ENCODE measurements at regions of chr5 and their contacts with region 1.

Region 1: GRCh38 chr5:66814146-66814991 is 218.2 kb downstream of the MAST4 start:
- DNase-seq: peak; percentile 71
- ATAC-seq: peak; percentile 74
- H3K4me3 Mint-ChIP-seq: no peak overlapping the region
- H3K27ac Mint-ChIP-seq: no peak overlapping the region
- H3K4me1 Mint-ChIP-seq: peaks cover 5% of the 10 kb centered on the region
- H3K27me3 Mint-ChIP-seq: peaks cover 1% of the 10 kb centered on the region
- CTCF ChIP-seq: peak; percentile 87

Region 2: DNA sequence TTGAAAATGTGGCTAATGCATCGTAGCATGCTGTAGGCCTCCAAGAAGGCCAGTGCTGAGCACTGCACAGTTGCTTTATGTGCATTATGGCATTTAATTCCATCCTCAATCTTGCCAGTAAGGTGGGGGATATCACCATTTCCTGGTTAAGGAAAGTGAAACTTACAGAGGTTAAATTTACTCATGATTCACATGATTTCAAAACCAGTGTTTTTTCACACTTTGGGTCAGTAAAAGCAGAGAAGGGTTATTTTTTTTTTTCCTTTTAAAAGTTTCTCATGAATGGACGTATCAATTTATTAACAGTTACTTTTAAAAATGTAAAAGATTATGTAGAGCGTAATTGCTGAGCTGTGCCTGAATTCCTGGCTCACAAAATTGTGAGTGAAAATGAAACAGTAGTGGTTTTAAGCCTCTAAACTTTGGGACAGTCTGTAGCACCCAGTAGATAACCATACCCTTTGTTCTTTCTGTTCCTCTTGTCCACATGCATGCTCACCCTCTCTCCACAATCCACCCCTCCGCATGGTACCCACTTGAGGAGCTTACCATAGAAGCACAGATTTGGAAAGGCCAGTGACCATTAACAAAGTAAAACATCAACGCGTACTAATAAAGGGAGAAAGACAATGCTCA is 197.0 kb before region 1 on chr5:
- CTCF ChIA-PET with region 1: no interaction called
- POLR2A ChIA-PET with region 1: no interaction called
- intact Hi-C with region 1: no loop called
- DNase-seq: no peak
- ATAC-seq: peak; percentile 66
- H3K4me3 Mint-ChIP-seq: no peak overlapping the region
- H3K27ac Mint-ChIP-seq: no peak overlapping the region
- H3K4me1 Mint-ChIP-seq: peaks cover 8% of the 10 kb centered on the region
- H3K27me3 Mint-ChIP-seq: peaks cover 4% of the 10 kb centered on the region
- CTCF ChIP-seq: no peak

Region 3: GRCh38 chr5:66828548-66829357 is 14.4 kb after region 1 on chr5:
- CTCF ChIA-PET with region 1: interaction called, 7 read pairs
- POLR2A ChIA-PET with region 1: interaction called, 10 read pairs
- intact Hi-C with region 1: no loop called
- DNase-seq: peak; percentile 87
- ATAC-seq: peak; percentile 94
- H3K4me3 Mint-ChIP-seq: peak overlapping the region; percentile 83
- H3K27ac Mint-ChIP-seq: peak overlapping the region; percentile 82
- H3K4me1 Mint-ChIP-seq: peaks cover 23% of the 10 kb centered on the region
- H3K27me3 Mint-ChIP-seq: peaks cover 39% of the 10 kb centered on the region
- CTCF ChIP-seq: no peak

Region 4: DNA sequence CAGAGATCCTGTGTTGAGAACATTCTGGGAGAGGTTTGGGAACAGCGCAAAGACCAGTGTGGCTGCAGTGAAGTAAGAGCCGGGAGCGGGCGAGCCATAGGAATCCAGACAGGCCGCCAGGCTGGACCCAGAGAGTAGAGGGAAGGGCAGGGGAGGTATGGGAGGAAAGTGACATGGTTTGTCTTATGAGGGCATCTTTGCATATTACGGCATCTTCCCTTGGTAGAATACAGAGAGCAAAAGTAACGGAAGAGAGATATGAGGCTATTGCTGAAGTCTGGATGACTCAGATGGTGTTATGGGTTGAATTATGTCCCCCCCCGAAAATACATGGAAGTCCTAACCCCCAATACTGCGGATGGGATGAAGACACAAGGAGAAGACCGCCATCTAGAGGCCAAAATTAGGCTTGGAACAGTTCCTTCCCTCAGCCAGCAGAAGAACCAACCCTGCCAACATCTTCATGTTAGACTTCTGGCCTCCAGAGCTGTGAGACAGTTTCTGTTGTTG is 50.0 kb after region 1 on chr5:
- CTCF ChIA-PET with region 1: interaction called, 59 read pairs
- POLR2A ChIA-PET with region 1: no interaction called
- intact Hi-C with region 1: loop called (anchors 5 kb)
- DNase-seq: peak; percentile 46
- ATAC-seq: peak; percentile 77
- H3K4me3 Mint-ChIP-seq: no peak overlapping the region
- H3K27ac Mint-ChIP-seq: no peak overlapping the region
- H3K4me1 Mint-ChIP-seq: no peaks in the 10 kb centered on the region
- H3K27me3 Mint-ChIP-seq: peaks cover 11% of the 10 kb centered on the region
- CTCF ChIP-seq: peak; percentile 62

Region 5: DNA sequence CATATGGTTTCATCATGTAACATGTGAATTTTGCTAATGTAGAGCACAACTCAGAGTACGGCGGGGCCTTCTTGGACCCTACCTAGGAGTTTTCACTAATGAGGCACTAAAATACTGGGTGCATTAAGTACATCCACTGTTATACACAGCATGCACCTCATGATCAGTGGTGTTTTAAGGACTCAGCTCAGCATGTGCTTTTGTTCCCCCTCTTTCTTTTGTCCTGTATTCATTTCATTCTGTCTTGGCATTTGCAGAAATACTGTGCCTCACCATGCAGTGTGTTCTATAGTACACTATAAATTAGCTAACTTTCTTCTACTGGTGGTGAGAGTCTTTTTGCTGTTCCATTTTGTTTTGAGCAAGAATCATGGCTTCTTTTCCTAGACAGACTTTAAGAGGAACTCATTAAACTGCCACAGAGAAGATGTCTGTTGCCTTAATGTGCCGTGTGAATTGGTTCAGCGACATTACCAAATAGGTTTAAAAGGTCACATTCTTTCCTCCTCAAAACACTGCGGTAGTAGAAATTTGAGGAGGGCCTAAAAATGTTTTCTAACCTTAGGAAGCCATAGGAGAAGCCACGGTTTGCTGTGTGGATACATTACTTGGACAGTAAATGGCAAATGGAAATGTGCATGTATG is 58.4 kb after region 1 on chr5:
- CTCF ChIA-PET with region 1: interaction called, 18 read pairs
- POLR2A ChIA-PET with region 1: no interaction called
- intact Hi-C with region 1: no loop called
- DNase-seq: no peak
- ATAC-seq: no peak
- H3K4me3 Mint-ChIP-seq: no peak overlapping the region
- H3K27ac Mint-ChIP-seq: no peak overlapping the region
- H3K4me1 Mint-ChIP-seq: no peaks in the 10 kb centered on the region
- H3K27me3 Mint-ChIP-seq: peaks cover 1% of the 10 kb centered on the region
- CTCF ChIP-seq: no peak

Region 6: GRCh38 chr5:67003935-67004729 is 189.8 kb after region 1 on chr5:
- CTCF ChIA-PET with region 1: no interaction called
- POLR2A ChIA-PET with region 1: no interaction called
- intact Hi-C with region 1: no loop called
- DNase-seq: peak; percentile 93
- ATAC-seq: peak; percentile 83
- H3K4me3 Mint-ChIP-seq: peak overlapping the region; percentile 80
- H3K27ac Mint-ChIP-seq: peak overlapping the region; percentile 85
- H3K4me1 Mint-ChIP-seq: peaks cover 57% of the 10 kb centered on the region
- H3K27me3 Mint-ChIP-seq: no peaks in the 10 kb centered on the region
- CTCF ChIP-seq: no peak

Measured in activated CD8-positive, alpha-beta T cell treated with anti-CD3 and anti-CD28 coated beads for 36 hours (primary cell).